SK-N-SH (cell line): ENCODE measurements at regions of chr5 and their contacts with region 1.

Region 1: GRCh38 chr5:149852641-149853330 is 91.8 kb downstream of the PDE6A start:
- DNase-seq: peak; percentile 73
- H3K4me3 ChIP-seq: no peak overlapping the region; a peak in 1 of 4 replicates
- H3K27ac ChIP-seq: no peak overlapping the region
- H3K4me1 ChIP-seq: peaks cover 5 to 6% of the 10 kb centered on the region in 2 experiments; a peak in 2 of 4 replicates
- H3K27me3 ChIP-seq: no peaks in the 10 kb centered on the region
- CTCF ChIP-seq: peak; percentile 92
- EP300 ChIP-seq: no peak
- RAD21 ChIP-seq: peak; percentile 73

Region 2: DNA sequence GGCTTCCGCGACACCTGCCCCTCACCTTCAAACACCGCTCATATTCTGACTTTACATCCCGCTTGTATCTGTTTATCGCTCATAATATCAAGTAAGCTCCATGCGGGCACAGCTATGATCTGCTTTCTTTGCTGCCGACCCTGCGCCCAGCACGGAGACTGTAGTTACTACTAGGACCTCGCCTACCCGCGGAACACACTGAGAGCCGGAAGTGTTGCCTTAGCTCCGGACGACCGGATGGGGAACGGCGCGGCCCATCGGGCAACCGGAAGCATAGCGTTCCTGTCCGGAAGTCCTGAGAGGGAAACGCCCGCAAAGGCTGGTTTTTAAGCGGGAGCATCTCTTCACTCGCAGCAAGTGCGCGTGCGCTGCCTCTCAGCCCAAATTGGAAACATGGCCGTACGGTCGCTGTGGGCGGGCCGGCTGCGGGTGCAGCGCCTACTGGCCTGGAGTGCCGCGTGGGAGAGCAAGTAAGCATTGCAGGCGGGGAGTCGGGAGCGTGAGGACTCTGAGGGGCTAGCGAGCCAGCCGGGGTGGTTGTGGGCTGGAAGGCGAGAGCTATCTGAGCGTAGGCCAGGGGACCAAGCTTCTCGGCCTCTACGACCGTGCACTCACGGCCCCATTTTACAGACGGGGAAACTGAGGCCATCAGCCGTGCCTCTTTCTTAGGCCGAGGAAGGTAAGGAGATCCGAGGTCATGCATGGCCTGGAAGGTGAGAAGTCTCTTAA is 507.5 kb before region 1 on chr5 and contains the start of gene GRPEL2:
- CTCF ChIA-PET with region 1: no interaction called
- POLR2A ChIA-PET with region 1: no interaction called
- DNase-seq: peak; percentile 92
- H3K4me3 ChIP-seq: peak within 1 kb of the TSS; percentile 94 to 100
- H3K27ac ChIP-seq: peak within 1 kb of the TSS; percentile 70 to 97
- H3K4me1 ChIP-seq: peaks cover 0 to 15% of the 10 kb centered on the region in 2 experiments; a peak in 3 of 4 replicates
- H3K27me3 ChIP-seq: no peaks in the 10 kb centered on the region
- CTCF ChIP-seq: no peak
- EP300 ChIP-seq: no peak
- RAD21 ChIP-seq: no peak
- polyA plus RNA-seq, gene GRPEL2: 4.6 and 6.0 TPM in 2 replicates

Region 3: GRCh38 chr5:149537374-149537975 is 315.3 kb before region 1 on chr5:
- CTCF ChIA-PET with region 1: no interaction called
- POLR2A ChIA-PET with region 1: no interaction called
- DNase-seq: no peak
- H3K4me3 ChIP-seq: no peak overlapping the region
- H3K27ac ChIP-seq: no peak overlapping the region
- H3K4me1 ChIP-seq: no peaks in the 10 kb centered on the region; a peak in 1 of 4 replicates
- H3K27me3 ChIP-seq: no peaks in the 10 kb centered on the region
- CTCF ChIP-seq: no peak
- EP300 ChIP-seq: no peak
- RAD21 ChIP-seq: no peak

Region 4: DNA sequence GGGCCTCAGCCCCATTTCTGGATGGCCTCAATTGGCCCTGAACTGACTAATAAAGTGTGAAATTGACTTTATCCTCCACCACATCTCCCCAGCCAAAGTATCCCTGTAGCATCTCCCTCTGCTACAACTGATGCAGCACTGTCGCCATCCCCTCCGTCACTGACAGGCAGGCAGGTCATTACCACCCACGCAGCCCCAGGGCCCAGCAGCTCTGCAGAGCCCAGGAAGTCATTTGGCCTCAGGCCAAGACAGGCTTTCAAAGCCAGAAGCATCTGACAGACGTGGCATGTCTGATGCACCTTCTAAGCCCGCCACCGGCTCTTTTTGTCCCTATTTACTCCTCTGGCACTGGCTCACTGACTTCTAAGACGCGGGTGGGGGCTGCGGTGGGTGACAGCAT is 206.2 kb before region 1 on chr5:
- CTCF ChIA-PET with region 1: interaction called, 13 read pairs
- POLR2A ChIA-PET with region 1: no interaction called
- DNase-seq: peak; percentile 80
- H3K4me3 ChIP-seq: no peak overlapping the region
- H3K27ac ChIP-seq: peak overlapping the region in 1 of 2 experiments; percentile 72; a peak in 2 of 4 replicates
- H3K4me1 ChIP-seq: peaks cover 0 to 14% of the 10 kb centered on the region in 2 experiments; a peak in 1 of 4 replicates
- H3K27me3 ChIP-seq: no peaks in the 10 kb centered on the region
- CTCF ChIP-seq: no peak
- EP300 ChIP-seq: peak in 1 of 2 experiments; percentile 35; a peak in 1 of 4 replicates
- RAD21 ChIP-seq: no peak

Region 5: GRCh38 chr5:149872351-149873040 is 19.7 kb after region 1 on chr5:
- CTCF ChIA-PET with region 1: interaction called, 29 read pairs
- POLR2A ChIA-PET with region 1: no interaction called
- DNase-seq: no peak
- H3K4me3 ChIP-seq: no peak overlapping the region
- H3K27ac ChIP-seq: no peak overlapping the region
- H3K4me1 ChIP-seq: no peaks in the 10 kb centered on the region
- H3K27me3 ChIP-seq: no peaks in the 10 kb centered on the region; the same call in 1 of the 2 replicates
- CTCF ChIP-seq: no peak
- EP300 ChIP-seq: no peak
- RAD21 ChIP-seq: no peak

Region 6: DNA sequence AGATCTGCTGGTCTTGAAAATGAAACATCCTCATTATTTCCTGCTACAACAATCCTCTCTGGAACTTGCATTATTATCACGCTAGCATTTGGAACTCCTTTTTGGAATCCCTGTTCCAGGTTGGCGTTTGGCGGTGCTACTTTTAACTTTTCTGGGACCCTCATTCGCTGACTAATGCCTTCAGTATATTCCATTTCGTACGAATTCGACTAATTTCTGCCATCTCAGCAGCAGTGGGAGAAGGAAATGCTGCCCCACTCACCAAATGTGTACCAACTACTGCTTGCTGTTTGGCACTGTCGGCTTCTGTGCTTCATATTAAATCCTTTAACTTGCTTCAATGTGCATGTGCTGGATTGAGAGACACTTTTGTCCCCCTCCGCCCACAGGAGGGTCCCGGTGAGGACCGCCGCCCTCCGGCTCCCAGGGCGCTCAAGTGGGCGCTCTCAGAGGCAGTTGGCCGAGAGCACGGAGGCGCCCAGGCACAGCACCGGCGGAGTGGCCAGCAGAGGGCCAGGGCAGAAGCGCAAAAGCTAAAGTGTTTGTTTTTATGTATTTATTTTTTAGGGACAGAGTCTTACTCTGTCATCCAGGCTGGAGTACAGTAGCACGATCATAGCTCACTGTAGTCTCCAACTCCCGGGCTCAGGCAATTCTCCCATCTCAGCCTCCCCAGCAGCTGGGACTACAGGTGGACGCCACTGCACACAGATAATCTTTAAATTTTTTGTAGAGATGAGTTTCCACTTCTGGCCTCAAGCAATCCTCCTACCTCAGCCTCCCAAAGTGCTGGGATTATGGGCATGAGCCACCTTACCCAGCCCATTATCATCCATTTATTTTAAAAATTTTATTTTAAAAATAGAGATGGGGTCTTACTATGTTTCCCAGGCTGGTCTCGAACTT is 79.9 kb after region 1 on chr5:
- CTCF ChIA-PET with region 1: interaction called, 13 read pairs
- POLR2A ChIA-PET with region 1: no interaction called
- DNase-seq: peak; percentile 60
- H3K4me3 ChIP-seq: peak overlapping the region; percentile 41 to 57
- H3K27ac ChIP-seq: peak overlapping the region; percentile 45 to 76; a peak in 3 of 4 replicates
- H3K4me1 ChIP-seq: peaks cover 12 to 15% of the 10 kb centered on the region in 2 experiments; a peak in 3 of 4 replicates
- H3K27me3 ChIP-seq: no peaks in the 10 kb centered on the region
- CTCF ChIP-seq: peak; percentile 65
- EP300 ChIP-seq: no peak
- RAD21 ChIP-seq: peak; percentile 31; the same call in 1 of the 2 replicates

Region 7: DNA sequence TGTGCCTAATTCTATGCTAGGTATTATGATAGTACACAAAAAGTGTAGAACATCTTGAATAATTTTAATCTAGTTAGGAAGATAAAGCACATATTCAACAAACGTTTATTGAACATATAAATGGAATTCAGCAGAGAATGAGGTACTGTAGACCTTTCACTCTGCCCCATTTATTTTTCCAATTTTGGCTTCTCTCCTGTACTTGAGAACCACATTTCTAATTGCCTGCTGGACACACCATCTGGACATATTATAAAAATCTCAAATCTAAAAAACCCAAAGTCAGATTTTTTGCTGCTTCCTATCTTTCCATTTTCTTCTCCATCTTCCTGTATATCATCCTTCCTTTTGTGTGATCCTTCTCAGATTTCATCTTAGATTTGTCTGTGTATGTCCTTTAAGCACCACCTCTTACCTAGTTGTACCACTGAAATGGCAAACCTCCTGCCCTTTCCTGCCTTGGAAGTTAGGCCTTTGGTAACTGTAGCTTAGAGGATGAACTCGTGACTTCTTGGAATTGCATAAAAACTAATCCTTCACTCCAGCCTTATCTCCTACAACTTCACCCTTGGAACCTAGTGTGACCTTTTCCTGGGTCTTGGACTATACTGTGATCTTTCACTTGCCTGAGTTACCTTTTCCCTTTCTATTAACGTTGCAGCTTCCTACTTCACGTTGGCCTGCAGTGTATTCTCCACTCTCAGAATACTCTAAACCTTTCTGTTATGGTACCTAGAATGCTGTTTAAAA is 116.6 kb after region 1 on chr5:
- CTCF ChIA-PET with region 1: interaction called, 35 read pairs
- POLR2A ChIA-PET with region 1: no interaction called
- DNase-seq: no peak
- H3K4me3 ChIP-seq: no peak overlapping the region
- H3K27ac ChIP-seq: no peak overlapping the region
- H3K4me1 ChIP-seq: no peaks in the 10 kb centered on the region
- H3K27me3 ChIP-seq: no peaks in the 10 kb centered on the region
- CTCF ChIP-seq: no peak
- EP300 ChIP-seq: no peak
- RAD21 ChIP-seq: no peak

Region 8: GRCh38 chr5:149990518-149991376 is 138.0 kb after region 1 on chr5:
- CTCF ChIA-PET with region 1: interaction called, 48 read pairs
- POLR2A ChIA-PET with region 1: no interaction called
- DNase-seq: peak; percentile 67
- H3K4me3 ChIP-seq: peak overlapping the region in 1 of 2 experiments; percentile 28; a peak in 1 of 4 replicates
- H3K27ac ChIP-seq: no peak overlapping the region
- H3K4me1 ChIP-seq: peaks cover 9 to 10% of the 10 kb centered on the region in 2 experiments; a peak in 1 of 4 replicates
- H3K27me3 ChIP-seq: no peaks in the 10 kb centered on the region
- CTCF ChIP-seq: peak; percentile 96
- EP300 ChIP-seq: peak in 1 of 2 experiments; percentile 28; a peak in 1 of 4 replicates
- RAD21 ChIP-seq: peak; percentile 98